Activated CD4-positive, alpha-beta memory T cell treated with anti-CD3 and anti-CD28 coated beads for 36 hours (primary cell): ENCODE measurements at regions of chr1 and their contacts with region 1.

Region 1: GRCh38 chr1:38990738-38991639 is at the start of gene AKIRIN1:
- DNase-seq: peak; percentile 99
- H3K4me3 Mint-ChIP-seq: peak within 1 kb of the TSS; percentile 81
- H3K27ac Mint-ChIP-seq: peak within 1 kb of the TSS; percentile 84
- H3K4me1 Mint-ChIP-seq: peaks cover 48% of the 10 kb centered on the region
- H3K27me3 Mint-ChIP-seq: no peaks in the 10 kb centered on the region
- total RNA-seq, gene AKIRIN1: 73.2 to 74.3 TPM

Region 2: GRCh38 chr1:38715415-38715814 is 275.6 kb before region 1 on chr1:
- CTCF ChIA-PET with region 1: no interaction called
- POLR2A ChIA-PET with region 1: no interaction called
- intact Hi-C with region 1: no loop called
- DNase-seq: no peak
- H3K4me3 Mint-ChIP-seq: no peak overlapping the region
- H3K27ac Mint-ChIP-seq: no peak overlapping the region
- H3K4me1 Mint-ChIP-seq: no peaks in the 10 kb centered on the region
- H3K27me3 Mint-ChIP-seq: peaks cover 1% of the 10 kb centered on the region

Region 3: DNA sequence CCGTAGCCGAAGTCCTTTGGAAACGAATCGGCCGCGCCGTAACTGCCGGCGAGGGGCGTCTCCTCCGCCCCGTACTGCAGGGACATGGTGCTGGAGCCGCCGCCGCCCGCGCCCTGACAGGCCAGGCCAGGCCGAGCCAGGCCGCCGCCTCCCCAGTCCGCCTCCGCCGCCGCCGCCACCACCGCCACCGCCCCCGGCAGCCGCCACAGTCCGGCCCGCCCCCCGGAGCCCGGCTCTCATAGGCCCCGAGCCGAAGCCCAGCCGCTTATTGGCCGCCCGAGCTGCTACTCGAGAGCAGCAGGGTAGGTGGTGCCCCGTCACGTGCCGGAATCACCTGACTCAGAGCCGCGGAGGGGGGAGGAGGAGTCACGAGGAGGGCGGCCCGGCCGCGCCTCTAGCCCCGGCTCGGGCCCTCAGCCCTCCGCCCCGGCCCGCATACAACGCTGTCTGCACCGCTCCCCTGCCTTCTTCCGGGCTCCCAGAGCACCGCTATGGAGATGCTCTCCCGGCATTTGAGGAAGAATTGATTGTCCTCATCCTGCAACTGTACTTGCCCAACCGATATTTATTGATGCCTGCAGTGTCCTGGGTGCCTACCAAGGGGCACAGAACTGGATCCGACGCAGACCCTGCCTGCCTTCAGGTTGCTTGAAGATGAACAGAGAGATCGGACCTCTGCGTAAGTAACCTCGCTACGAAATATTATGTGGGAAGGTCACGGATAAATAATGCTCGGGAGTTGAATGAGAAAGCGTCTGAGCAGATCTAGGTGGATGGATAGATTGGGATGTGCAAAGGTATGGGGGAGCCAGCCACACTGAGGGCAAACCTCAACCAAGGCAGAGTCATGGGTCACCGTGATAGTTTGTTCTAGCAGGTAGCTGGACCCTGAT is 131.2 kb before region 1 on chr1 and contains the start of gene RRAGC:
- CTCF ChIA-PET with region 1: interaction called, 3 read pairs
- POLR2A ChIA-PET with region 1: interaction called, 3 read pairs
- intact Hi-C with region 1: loop called (anchors 1 kb)
- DNase-seq: peak; percentile 99
- H3K4me3 Mint-ChIP-seq: peak within 1 kb of the TSS; percentile 99
- H3K27ac Mint-ChIP-seq: peak within 1 kb of the TSS; percentile 95
- H3K4me1 Mint-ChIP-seq: peaks cover 71% of the 10 kb centered on the region
- H3K27me3 Mint-ChIP-seq: no peaks in the 10 kb centered on the region
- total RNA-seq, gene RRAGC: 27.6 to 29.7 TPM

Region 4: DNA sequence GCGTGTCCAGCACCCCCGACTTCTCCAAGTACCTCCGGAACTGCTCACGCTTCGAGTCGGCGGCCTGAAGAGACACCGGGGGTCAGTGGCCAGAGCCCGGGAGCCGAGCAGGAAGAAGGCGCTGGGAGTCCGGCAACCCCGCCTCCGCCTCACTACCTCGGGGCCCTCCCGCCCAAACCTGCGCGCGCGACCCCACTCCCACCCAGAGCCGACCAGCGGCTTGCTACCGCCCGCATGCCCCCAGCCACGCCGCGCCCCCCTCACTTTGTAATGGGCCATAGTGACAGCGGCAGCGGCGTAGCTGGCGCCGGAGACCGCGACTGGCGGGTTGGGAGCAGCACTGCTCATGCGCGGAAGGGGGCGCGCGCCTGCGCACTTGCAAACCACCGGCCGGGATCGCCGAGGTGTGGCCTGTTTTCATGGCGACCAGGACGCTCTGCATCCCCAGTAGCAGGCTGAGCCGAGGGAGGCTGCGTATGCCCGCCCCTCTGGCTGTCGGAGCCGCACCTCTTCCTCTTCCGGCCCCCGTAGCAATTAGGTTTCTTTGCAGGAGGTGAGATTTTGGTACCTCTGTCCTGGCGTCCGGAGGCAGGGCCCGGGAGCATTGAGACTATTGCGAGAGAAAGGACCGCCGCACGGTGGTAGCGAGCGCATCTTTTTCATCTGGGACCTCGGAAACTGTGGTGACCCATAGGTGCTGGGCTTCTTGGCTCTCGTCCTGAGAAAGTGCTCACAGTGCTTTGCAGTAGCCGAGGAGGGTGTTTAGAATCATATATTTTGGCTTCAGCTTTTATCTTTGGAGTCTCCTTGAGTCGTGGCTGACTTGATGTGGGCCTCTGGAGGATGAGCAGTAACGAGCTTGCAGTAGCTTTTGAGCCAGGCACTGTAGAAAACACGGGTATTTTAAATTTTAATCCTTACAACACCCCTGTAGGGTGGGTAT is 117.7 kb before region 1 on chr1 and contains the start of gene MYCBP:
- CTCF ChIA-PET with region 1: no interaction called
- POLR2A ChIA-PET with region 1: no interaction called
- intact Hi-C with region 1: loop called (anchors 2 kb)
- DNase-seq: peak; percentile 98
- H3K4me3 Mint-ChIP-seq: peak within 1 kb of the TSS; percentile 91
- H3K27ac Mint-ChIP-seq: peak within 1 kb of the TSS; percentile 71
- H3K4me1 Mint-ChIP-seq: peaks cover 26% of the 10 kb centered on the region
- H3K27me3 Mint-ChIP-seq: no peaks in the 10 kb centered on the region
- total RNA-seq, gene MYCBP: 70.6 to 76.5 TPM

Region 5: DNA sequence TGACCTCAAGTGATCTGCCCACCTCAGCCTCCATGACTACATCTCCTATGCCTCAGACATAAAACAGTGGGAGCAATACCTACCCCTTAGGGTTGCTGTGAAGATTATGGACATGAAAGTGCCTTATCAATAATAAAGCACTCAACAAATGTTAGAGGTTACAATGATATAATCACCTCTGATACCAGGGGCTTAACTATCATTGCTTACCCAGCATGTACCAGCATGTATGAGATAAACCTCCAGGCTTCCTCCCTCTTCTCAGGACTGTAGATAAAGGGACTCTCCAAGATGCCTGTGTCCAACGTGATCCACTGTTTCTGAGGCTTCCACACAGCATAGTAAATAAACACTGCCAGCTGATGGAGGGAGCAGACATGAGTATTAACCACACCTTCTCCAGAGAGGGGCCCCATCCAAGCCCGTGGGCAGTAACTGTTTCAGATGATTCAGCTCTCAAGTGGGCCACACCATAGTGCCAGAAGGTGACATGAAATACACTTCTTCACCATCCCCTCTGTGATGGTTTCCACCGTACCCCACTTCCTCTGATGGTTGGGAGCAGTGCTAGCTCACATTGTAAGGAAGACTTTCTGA is 75.5 kb before region 1 on chr1:
- CTCF ChIA-PET with region 1: no interaction called
- POLR2A ChIA-PET with region 1: no interaction called
- intact Hi-C with region 1: no loop called
- DNase-seq: peak; percentile 42
- H3K4me3 Mint-ChIP-seq: no peak overlapping the region
- H3K27ac Mint-ChIP-seq: no peak overlapping the region
- H3K4me1 Mint-ChIP-seq: peaks cover 10% of the 10 kb centered on the region
- H3K27me3 Mint-ChIP-seq: no peaks in the 10 kb centered on the region

Region 6: DNA sequence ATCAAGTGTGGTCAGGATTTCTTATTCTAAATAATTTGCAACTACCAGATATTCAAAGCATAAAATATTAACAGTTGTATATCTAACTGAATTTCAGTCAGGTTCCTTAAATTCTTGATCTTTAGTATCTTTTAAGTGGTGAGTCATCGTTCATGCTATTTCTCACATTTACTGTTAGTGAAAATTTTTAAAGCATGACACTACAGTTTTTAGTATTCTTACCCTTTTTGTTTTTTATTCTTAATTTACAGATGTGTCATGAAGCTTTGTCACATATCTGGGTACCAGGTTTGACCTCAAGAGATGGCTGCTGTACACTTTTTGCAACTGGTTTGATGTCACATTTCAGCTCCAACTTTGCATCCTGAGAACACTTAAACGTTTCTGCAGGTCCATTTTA is 12.8 kb after region 1 on chr1:
- CTCF ChIA-PET with region 1: interaction called, 6 read pairs
- POLR2A ChIA-PET with region 1: interaction called, 6 read pairs
- intact Hi-C with region 1: loop called (anchors 1 kb)
- DNase-seq: no peak
- H3K4me3 Mint-ChIP-seq: peak overlapping the region; percentile 41
- H3K27ac Mint-ChIP-seq: peak overlapping the region; percentile 89
- H3K4me1 Mint-ChIP-seq: peaks cover 44% of the 10 kb centered on the region
- H3K27me3 Mint-ChIP-seq: no peaks in the 10 kb centered on the region

Region 7: DNA sequence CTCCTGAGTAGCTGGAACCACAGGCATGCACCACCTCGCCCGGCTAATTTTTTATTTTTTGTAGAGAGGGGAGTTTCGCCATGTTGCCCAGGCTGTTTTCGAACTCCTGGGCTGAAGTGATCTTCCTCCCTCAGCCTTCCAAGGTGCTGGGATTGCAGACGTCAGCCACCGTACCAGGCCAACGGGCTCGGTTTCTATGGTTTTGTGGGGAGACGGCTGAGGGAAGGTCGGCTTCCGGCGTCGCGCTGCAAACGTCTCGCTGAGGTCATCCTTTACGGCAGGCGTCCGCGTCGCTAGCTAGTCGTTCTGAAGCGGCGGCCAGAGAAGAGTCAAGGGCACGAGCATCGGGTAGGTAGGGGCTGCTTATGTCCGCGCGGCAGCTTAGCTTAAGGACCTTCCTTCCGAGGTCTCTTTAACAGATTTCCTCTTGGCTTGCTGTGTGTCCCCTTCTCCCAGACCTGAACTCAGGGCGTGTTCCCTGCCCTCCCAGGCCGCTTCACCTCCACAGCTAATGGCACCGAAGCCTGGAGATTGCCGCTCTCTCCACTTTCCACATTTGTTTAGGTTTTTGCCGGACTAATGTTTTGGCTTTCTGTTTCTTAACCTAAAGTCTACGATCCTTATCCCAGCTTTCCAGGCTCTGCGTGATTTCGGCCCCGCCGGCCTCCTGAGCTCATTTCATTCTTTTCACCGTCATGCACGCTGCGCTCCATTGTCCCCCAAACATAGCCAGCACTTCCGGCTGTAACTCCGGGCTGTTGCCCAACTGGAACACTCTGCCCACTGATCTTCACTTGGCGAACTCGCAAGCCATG is 35.3 kb after region 1 on chr1 and contains the start of gene NDUFS5:
- CTCF ChIA-PET with region 1: interaction called, 3 read pairs
- POLR2A ChIA-PET with region 1: interaction called, 5 read pairs
- intact Hi-C with region 1: loop called (anchors 5 kb)
- DNase-seq: peak; percentile 91
- H3K4me3 Mint-ChIP-seq: peak within 1 kb of the TSS; percentile 88
- H3K27ac Mint-ChIP-seq: peak within 1 kb of the TSS; percentile 95
- H3K4me1 Mint-ChIP-seq: peaks cover 28% of the 10 kb centered on the region
- H3K27me3 Mint-ChIP-seq: no peaks in the 10 kb centered on the region
- total RNA-seq, gene NDUFS5: 238 to 240 TPM

Region 8: DNA sequence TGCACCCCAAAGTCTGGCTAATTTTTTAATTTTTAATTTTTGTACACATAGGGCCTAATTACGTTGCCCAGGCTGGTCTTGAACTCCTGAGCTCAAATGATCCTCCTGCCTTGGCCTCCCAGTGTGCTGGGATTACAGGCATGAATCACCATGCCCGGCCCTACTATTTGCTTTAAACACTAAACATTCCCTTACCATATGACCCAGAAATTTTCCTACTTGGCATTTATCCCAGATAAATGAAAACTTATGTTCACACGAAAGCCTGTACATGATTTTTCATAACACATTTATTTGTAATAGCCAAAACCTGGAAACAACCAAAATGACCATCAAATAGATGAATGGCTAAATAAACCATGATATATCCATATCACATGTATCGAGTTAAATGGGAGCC is 71.0 kb after region 1 on chr1:
- CTCF ChIA-PET with region 1: no interaction called
- POLR2A ChIA-PET with region 1: no interaction called
- intact Hi-C with region 1: no loop called
- DNase-seq: no peak
- H3K4me3 Mint-ChIP-seq: no peak overlapping the region
- H3K27ac Mint-ChIP-seq: no peak overlapping the region
- H3K4me1 Mint-ChIP-seq: no peaks in the 10 kb centered on the region
- H3K27me3 Mint-ChIP-seq: no peaks in the 10 kb centered on the region